ENCODE measurements at regions of chr6 and their contacts with region 1.

Region 1: DNA sequence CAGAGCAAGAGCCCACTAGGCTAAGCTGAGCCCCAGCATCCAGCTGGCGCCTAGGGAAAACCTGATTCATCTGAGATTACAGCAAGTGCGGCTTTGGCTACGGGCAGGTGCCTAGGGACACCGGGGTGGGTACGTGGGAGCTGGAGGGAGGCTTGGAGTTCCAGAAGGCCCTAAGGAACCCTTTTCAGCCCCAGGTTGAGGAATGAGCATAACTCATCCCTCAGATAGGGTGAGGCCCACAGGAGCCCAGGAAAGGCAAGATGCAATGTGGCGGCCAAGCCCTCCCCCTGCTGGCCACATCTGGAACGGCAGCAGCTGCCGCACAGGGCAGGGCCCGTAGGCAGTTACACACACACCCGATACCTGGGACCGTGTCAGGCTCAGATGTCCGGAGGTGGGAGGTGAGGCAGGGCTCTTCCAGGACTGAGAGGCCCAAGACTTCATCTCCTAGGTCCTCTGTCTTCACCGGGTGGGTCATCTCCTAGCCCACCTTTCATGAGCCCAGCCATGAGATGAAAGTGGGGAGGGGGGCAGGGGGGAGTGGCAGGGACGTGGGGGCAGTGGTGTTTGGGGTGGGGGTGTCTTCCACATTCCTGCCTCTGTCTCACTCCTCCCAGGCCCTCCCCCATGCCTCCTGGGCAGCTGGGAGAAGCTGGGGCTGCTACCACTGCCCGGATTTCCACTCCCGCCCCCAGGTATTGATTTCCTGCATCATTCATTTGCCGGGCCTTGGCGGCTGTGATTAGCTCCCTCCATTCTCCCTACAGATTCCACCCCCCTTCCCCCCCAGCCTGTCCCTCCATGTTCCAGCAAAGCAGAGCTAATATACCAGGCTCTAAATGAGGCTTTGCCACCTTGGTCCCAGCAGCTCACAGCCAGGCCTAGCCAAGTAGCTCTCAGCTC is 5.5 kb downstream of the MDGA1 start:
- DNase-seq: peak; percentile 83
- ATAC-seq: peak; percentile 77

Region 2: GRCh38 chr6:37731888-37732287 is 39.7 kb after region 1 on chr6:
- intact Hi-C with region 1: loop called (anchors 5 kb)
- DNase-seq: no peak
- ATAC-seq: no peak

Region 3: GRCh38 chr6:38212579-38212978 is 520.4 kb after region 1 on chr6:
- intact Hi-C with region 1: no loop called
- DNase-seq: peak; percentile 66
- ATAC-seq: peak; percentile 72

Measured in sciatic nerve (tissue), 2 donors.